HepG2 (cell line): ENCODE measurements at regions of chr10 and their contacts with region 1.

Region 1: DNA sequence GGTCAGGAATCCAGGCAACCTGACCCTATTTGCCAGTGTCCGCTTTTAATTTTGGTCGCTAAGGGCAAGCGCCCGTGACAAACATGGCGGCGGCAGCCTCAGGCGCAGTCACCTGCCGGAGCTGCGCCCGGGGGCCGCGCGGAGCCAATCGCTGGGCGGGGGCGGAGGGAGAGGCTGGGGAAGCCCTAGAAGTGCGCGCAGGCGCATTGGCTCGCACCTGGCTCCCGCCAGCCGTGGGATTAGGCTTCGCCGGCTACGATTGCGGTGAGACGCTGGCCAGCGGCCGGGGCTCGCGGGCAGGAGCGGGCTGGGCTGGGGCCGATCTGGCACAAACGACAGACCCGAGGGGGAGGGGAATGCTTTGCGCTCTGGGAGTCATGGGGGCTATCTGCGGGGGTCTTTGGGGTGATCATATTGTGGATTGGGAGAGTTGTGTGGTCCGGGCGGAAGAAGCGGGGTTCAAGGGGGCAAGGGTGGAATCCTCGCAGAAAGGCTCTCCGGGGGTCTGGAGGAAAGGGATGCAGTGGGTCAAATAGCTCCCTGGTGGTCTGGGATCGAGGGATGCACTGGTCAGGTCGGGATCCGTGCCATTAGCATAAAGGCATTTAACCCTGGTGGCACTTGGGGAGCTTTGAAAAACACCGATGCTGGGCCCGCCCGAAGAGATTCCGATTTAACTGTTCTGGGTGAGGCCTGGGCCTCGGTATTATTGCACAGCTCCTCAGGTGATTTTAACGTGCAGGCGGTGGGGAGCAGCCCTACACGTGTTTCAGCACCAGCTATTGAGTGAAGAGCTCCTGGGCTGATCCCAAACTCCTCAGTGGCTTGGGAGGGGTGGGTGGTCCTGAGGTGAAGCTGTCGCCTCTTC is 10.1 kb upstream of the C10orf95 start:
- DNase-seq: peak; percentile 77
- ATAC-seq: peak; percentile 81
- H3K4me3 ChIP-seq: peak overlapping the region; percentile 45 to 74 (median 64)
- H3K27ac ChIP-seq: no peak overlapping the region
- H3K4me1 ChIP-seq: peaks cover 58% of the 10 kb centered on the region
- H3K27me3 ChIP-seq: no peaks in the 10 kb centered on the region
- CTCF ChIP-seq: no peak
- EP300 ChIP-seq: peak in 1 of 2 experiments; percentile 4; a peak in 1 of 4 replicates
- POLR2A ChIP-seq: peak; percentile 42 to 70; a peak in 3 of 4 replicates
- RAD21 ChIP-seq: no peak

Region 2: DNA sequence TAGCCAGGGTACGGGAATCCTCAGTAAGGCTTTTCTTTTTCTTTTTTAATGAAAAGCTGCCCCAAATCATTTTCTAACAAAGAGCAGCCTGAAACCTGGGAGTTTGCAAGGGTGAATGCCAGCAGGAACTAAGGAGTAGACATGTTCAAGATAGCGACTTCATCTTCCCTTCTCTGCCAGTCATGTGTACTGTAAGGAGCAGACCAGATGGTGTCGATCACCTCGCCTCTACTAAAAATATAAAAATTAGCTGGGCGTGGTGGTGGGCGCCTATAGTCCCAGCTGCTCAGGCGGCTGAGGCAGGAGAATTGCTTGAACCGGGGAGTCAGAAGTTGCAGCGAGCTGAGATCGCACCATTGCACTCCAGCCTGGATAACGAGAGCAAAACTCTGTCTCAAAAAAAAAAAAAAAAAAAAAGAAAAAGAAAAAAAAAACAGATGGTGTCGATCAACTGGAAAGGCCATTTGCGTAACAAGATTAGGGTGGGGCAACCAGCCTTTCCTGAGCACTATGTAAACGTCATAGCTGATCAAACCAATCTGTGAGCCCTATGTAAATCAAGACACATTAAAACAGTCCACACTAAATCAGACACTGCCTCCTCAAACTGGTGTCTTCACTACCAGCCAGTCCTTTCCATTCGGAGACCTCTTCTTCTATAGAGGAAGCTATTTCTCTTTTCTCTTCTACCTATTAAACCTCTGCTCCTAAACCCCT is 275.5 kb before region 1 on chr10:
- CTCF ChIA-PET with region 1: no interaction called
- POLR2A ChIA-PET with region 1: no interaction called
- in situ Hi-C with region 1: no loop called
- intact Hi-C with region 1: no loop called
- DNase-seq: no peak
- ATAC-seq: no peak
- H3K4me3 ChIP-seq: no peak overlapping the region
- H3K27ac ChIP-seq: no peak overlapping the region
- H3K4me1 ChIP-seq: peaks cover 11% of the 10 kb centered on the region
- H3K27me3 ChIP-seq: no peaks in the 10 kb centered on the region
- CTCF ChIP-seq: no peak
- EP300 ChIP-seq: no peak
- POLR2A ChIP-seq: no peak
- RAD21 ChIP-seq: no peak

Region 3: GRCh38 chr10:102420810-102421644 is 40.4 kb before region 1 on chr10 and contains the start of gene FBXL15:
- CTCF ChIA-PET with region 1: no interaction called
- POLR2A ChIA-PET with region 1: interaction called, 29 read pairs
- in situ Hi-C with region 1: loop called (anchors 5 kb)
- intact Hi-C with region 1: loop called (anchors 2 kb)
- DNase-seq: peak; percentile 95
- ATAC-seq: peak; percentile 58
- H3K4me3 ChIP-seq: peak within 1 kb of the TSS; percentile 79 to 97 (median 84)
- H3K27ac ChIP-seq: peak within 1 kb of the TSS; percentile 87
- H3K4me1 ChIP-seq: peaks cover 35% of the 10 kb centered on the region
- H3K27me3 ChIP-seq: peaks cover 1 to 5% of the 10 kb centered on the region in 2 experiments; a peak in 2 of 5 replicates
- CTCF ChIP-seq: no peak
- EP300 ChIP-seq: 0 out of 4 replicates have a peak, but pooled peaks have one; percentile 24 to 30
- POLR2A ChIP-seq: peak in 1 of 2 experiments; percentile 52; a peak in 1 of 4 replicates
- RAD21 ChIP-seq: no peak
- total RNA-seq, gene FBXL15: 8.3 and 8.6 TPM in 2 replicates

Region 4: DNA sequence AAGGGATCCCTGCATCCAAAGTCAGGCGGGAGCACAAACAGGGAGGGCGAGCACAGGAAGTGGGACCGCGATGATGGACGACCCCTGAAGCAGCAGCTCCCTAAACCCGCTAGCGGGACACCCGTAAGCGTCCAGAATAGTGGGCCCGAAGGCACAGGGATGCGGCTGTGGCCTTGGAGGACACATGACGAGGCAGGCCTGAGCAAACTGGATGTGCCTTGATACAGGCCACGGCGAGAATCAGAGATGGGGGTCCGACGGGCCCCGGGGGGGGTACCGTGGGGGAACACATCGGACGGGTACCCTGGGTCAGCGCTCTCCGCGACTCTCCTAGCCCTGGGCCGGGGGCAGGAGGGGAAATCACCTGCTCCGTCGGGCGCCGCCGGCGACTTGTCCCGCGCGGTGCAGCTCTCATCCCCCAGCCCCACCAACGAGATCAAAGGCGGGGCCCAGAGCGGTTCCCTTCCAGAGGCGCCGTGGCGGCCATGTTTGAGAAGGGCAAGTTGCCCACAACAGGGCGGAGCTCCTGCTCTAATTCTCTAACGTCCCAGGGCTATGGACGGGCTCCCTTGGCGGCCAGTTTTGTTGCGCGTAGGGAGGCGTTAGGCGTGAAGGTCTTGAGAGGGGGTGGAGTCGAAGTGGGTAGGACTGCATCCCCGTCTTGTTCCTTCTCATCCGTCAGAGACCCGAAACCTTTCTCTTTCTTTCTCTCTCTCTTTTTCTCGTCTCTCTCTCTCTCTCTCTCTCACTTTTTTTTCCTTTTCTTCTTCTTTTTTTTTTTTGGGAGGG is 29.1 kb before region 1 on chr10 and contains the start of gene CUEDC2:
- CTCF ChIA-PET with region 1: no interaction called
- POLR2A ChIA-PET with region 1: interaction called, 67 read pairs
- in situ Hi-C with region 1: no loop called
- intact Hi-C with region 1: no loop called
- DNase-seq: peak; percentile 89
- ATAC-seq: peak; percentile 78
- H3K4me3 ChIP-seq: peak within 1 kb of the TSS; percentile 74 to 92 (median 91)
- H3K27ac ChIP-seq: peak within 1 kb of the TSS; percentile 72
- H3K4me1 ChIP-seq: peaks cover 35% of the 10 kb centered on the region
- H3K27me3 ChIP-seq: no peaks in the 10 kb centered on the region; a peak in 1 of 5 replicates
- CTCF ChIP-seq: 0 out of 2 replicates have a peak, but pooled peaks have one; percentile 46
- EP300 ChIP-seq: 0 out of 4 replicates have a peak, but pooled peaks of 1 of the 2 experiments have one; percentile 17
- POLR2A ChIP-seq: peak; percentile 67 to 81
- RAD21 ChIP-seq: 0 out of 2 replicates have a peak, but pooled peaks have one; percentile 40
- total RNA-seq, gene CUEDC2: 13.0 and 13.1 TPM in 2 replicates

Region 5: GRCh38 chr10:102450194-102450938 is 11.1 kb before region 1 on chr10:
- CTCF ChIA-PET with region 1: no interaction called
- POLR2A ChIA-PET with region 1: interaction called, 73 read pairs
- in situ Hi-C with region 1: no loop called
- intact Hi-C with region 1: no loop called
- DNase-seq: peak; percentile 75
- ATAC-seq: peak; percentile 89
- H3K4me3 ChIP-seq: peak overlapping the region; percentile 64 to 96 (median 72)
- H3K27ac ChIP-seq: peak overlapping the region; percentile 82
- H3K4me1 ChIP-seq: peaks cover 28% of the 10 kb centered on the region
- H3K27me3 ChIP-seq: no peaks in the 10 kb centered on the region; a peak in 1 of 5 replicates
- CTCF ChIP-seq: no peak; the same call in 1 of the 2 replicates
- EP300 ChIP-seq: no peak
- POLR2A ChIP-seq: peak; percentile 52 to 64; a peak in 3 of 4 replicates
- RAD21 ChIP-seq: peak; percentile 76

Region 6: DNA sequence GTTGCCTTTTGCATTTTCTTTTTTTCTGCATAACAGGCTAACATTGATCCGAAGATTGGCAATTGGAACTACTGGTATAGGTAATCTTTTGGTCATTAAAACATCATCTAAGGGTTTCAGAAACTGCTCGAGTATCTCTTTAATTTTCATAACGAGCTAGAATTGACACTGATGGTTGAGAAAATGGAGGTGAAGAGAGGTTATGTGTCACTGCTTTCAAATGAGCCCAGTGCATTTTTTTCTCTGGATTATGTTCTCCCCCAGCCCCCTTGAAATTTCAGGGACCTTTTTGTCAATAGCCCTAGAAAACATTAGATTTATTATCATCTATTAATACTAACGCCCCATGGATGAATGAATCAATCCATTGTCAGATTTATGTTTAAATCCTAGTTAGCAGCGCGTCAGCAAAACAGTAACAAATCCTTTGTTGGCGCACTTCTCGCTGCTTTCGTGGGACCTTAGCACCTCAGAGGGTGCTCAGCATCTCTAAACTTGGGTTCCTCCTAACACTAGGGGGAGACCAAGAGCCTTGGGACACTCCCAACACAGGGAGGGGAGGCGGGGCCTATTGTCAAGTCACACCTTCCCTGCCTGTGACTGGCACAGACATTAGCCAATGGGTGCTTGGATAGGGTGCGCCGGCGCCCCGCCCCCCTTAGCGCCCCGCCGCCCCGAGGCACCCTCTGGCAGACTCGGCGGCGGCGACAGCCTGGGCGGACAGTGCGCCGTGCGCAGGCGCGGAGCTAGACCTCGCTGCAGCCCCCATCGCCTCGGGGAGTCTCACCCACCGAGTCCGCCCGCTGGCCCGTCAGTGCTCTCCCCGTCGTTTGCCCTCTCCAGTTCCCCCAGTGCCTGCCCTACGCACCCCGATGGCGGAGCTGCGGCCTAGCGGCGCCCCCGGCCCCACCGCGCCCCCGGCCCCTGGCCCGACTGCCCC is 42.1 kb after region 1 on chr10 and contains the start of gene SUFU:
- CTCF ChIA-PET with region 1: no interaction called
- POLR2A ChIA-PET with region 1: interaction called, 11 read pairs
- in situ Hi-C with region 1: no loop called
- intact Hi-C with region 1: no loop called
- DNase-seq: peak; percentile 98
- ATAC-seq: peak; percentile 72
- H3K4me3 ChIP-seq: peak within 1 kb of the TSS; percentile 92 to 97 (median 96)
- H3K27ac ChIP-seq: peak within 1 kb of the TSS; percentile 75
- H3K4me1 ChIP-seq: peaks cover 49% of the 10 kb centered on the region
- H3K27me3 ChIP-seq: no peaks in the 10 kb centered on the region; a peak in 1 of 5 replicates
- CTCF ChIP-seq: peak; percentile 94
- EP300 ChIP-seq: no peak
- POLR2A ChIP-seq: peak; percentile 55 to 94
- RAD21 ChIP-seq: peak; percentile 69
- total RNA-seq, gene SUFU: 2.9 and 4.0 TPM in 2 replicates

Region 7: GRCh38 chr10:102523250-102524029 is 62.0 kb after region 1 on chr10:
- CTCF ChIA-PET with region 1: no interaction called
- POLR2A ChIA-PET with region 1: no interaction called
- in situ Hi-C with region 1: no loop called
- intact Hi-C with region 1: loop called (anchors 2 kb)
- DNase-seq: peak; percentile 23
- ATAC-seq: peak; percentile 47
- H3K4me3 ChIP-seq: no peak overlapping the region
- H3K27ac ChIP-seq: peak overlapping the region; percentile 6
- H3K4me1 ChIP-seq: peaks cover 8% of the 10 kb centered on the region; the same call in 1 of the 2 replicates
- H3K27me3 ChIP-seq: no peaks in the 10 kb centered on the region
- CTCF ChIP-seq: no peak
- EP300 ChIP-seq: no peak
- POLR2A ChIP-seq: no peak
- RAD21 ChIP-seq: no peak